ENCODE measurements at regions of chr3 and their contacts with region 1.

Region 1: DNA sequence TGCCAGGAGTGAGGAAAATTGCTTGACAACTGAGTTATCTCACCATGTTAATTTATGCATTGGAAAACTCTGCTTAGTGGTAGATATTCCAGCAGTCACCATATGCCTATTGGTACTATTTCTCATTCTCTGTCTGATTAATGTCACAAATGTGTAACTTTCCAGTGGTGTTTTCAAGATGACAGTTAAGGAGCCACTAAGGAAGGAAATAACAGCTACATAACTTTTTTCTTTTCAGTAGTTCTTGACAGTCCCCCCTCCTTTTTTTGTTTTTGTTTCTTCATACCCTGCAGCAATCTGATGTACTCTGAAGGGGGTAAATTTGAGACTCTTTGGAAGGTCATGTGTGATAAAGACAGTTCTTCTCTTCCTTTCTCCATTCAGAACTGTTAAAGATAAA is 13.1 kb downstream of the RASA2 start:
- DNase-seq: no peak
- ATAC-seq: no peak
- H3K4me3 ChIP-seq: no peak overlapping the region
- H3K27ac ChIP-seq: peak overlapping the region in 1 of 12 donors; percentile 84
- H3K4me1 ChIP-seq: peaks cover 0 to 56% (median 10%) of the 10 kb centered on the region in 12 donors
- H3K27me3 ChIP-seq: no peaks in the 10 kb centered on the region
- CTCF ChIP-seq: no peak
- POLR2A ChIP-seq: no peak

Region 2: DNA sequence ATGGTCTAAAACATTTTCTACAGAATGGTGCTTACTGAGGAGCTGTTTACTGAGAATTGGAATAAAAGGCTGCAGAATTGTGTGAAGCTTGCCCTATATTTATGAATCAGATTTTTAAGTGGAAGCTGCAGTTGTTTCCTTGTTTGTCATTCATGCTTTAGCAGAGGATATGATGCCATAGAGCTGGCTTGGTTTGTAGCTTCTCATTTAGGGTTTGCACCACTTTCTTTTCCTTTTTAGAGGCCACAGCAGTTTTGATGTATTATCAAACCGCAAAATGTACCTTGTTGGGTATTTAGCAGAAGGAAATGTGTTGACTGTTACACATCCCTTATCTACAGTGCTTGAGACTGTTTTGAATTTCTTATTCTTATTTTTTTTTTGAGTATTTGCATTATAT is 53.1 kb after region 1 on chr3:
- intact Hi-C with region 1: loop called in 1 of 10 experiments (anchors 5 kb)
- DNase-seq: no peak
- ATAC-seq: peak in 2 of 4 donors; percentile 34 to 51
- H3K4me3 ChIP-seq: no peak overlapping the region
- H3K27ac ChIP-seq: peak overlapping the region in 1 of 12 donors; percentile 53
- H3K4me1 ChIP-seq: peaks cover 0 to 42% (median 1%) of the 10 kb centered on the region in 12 donors
- H3K27me3 ChIP-seq: no peaks in the 10 kb centered on the region
- CTCF ChIP-seq: no peak
- POLR2A ChIP-seq: no peak

Region 3: DNA sequence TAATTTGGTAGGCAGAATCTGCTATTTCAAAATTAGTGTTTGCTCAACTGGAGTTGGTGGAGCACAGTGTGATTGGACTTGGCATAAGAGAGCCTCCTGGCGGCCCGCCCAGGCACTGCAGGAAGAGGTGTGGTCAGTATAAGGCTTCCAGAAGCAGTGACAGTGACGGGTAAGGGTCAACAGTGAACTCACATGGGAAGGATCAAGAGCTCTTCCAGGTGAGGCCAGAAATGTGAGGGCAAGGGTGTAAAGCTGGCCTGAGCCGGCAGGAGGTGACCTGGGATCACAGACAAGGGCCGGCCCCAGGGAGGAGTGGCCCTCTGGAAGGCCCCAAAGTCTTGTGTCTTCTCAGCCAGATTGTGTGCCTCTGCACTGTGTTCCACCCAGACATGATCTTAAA is 145.0 kb after region 1 on chr3:
- intact Hi-C with region 1: no loop called
- DNase-seq: peak; percentile 71 to 91 (median 73)
- ATAC-seq: peak; percentile 61 to 86 (median 83)
- H3K4me3 ChIP-seq: no peak overlapping the region
- H3K27ac ChIP-seq: no peak overlapping the region
- H3K4me1 ChIP-seq: peaks cover 0 to 6% (median 0%) of the 10 kb centered on the region in 12 donors
- H3K27me3 ChIP-seq: no peaks in the 10 kb centered on the region
- CTCF ChIP-seq: peak; percentile 41 to 73 (median 63)
- POLR2A ChIP-seq: no peak

Measured in heart left ventricle (tissue), 16 donors.